Transverse colon (tissue), 4 donors: ENCODE measurements at regions of chr19 and their contacts with region 1.

Region 1: DNA sequence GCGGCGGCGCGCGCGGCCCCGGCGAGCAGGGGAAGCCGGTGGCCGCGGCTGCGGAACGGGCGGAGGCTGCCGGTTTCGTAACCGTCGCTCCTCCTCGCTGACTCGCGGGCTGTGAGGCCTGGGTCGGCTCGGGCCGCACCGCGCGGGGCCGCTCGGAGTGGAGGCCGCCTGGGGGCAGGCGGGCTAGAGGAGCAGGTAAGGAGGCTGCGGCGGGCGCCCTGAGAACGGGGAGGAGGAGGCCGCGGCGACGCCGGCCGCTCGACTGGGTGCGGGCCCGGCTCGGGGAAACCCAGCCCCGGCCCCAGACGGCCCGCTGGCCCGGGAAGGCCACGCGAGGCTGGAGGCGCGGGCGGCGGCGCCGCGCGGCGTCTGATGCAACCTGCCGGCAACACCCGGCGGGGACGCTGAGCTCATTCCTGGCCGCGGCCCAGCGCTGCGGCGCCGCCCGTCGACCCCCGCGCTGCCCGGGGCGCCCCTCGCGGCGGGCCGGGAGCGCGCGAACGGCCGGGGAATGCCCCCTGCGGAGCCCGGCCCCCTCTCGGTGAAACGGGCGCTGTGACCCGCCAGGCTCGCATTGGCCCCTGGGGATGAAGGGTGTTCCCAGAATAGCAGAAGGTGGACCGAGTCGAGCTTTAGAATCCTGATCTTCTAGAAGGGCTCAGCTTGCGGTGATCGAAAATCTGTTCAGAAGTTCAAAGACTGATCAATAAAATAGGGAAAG is at the start of gene CEBPG:
- DNase-seq: peak; percentile 68
- H3K4me3 ChIP-seq: peak within 1 kb of the TSS; percentile 83 to 96 (median 94)
- H3K27ac ChIP-seq: peak within 1 kb of the TSS; percentile 98 to 100 (median 100)
- H3K4me1 ChIP-seq: peaks cover 20 to 53% (median 42%) of the 10 kb centered on the region in 4 donors
- H3K27me3 ChIP-seq: no peaks in the 10 kb centered on the region
- CTCF ChIP-seq: peak in 3 of 5 experiments; percentile 18 to 36 (median 25)
- EP300 ChIP-seq: no peak
- POLR2A ChIP-seq: no peak
- total RNA-seq, gene CEBPG: 22.4 to 66.7 (median 46.9) TPM

Region 2: DNA sequence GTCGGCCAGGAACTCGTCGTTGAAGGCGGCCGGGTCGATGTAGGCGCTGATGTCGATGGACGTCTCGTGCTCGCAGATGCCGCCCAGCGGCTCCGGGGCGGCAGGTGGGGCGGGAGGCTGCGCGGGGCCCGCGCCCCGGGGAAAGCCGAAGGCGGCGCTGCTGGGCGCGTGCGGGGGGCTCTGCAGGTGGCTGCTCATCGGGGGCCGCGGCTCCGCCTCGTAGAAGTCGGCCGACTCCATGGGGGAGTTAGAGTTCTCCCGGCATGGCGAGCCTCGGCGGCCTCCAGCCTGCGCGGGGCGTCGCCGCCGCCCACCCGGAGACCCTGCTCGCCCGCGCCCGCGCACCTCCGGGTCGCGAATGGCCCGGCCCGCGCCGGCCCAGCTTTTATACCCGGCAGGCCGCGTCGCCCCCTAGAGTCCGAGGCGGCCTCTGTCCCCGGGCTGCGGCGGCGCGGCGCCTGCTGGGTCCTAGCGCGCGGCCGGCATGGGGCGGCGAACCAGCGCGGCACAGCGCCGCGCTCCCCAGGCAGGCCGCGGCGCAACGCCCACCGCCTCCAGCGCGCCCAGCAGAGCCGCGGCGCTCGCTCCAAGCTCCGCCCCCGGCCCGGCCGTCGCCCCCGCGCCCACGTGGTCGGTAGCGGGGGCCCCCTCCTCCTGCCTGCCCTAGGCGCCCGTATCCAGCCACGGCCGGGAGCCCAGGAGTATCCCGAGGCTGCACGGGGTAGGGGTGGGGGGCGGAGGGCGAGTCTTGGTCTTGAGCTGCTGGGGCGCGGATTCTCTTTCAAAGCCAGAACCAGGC is 71.5 kb before region 1 on chr19 and contains the start of gene CEBPA:
- in situ Hi-C with region 1: no loop called
- intact Hi-C with region 1: loop called (anchors 2 kb)
- DNase-seq: peak; percentile 88
- H3K4me3 ChIP-seq: peak within 1 kb of the TSS; percentile 55 to 78 (median 73)
- H3K27ac ChIP-seq: peak within 1 kb of the TSS; percentile 90 to 94 (median 92)
- H3K4me1 ChIP-seq: peaks cover 7 to 65% (median 26%) of the 10 kb centered on the region in 4 donors
- H3K27me3 ChIP-seq: peaks cover 9% of the 10 kb centered on the region
- CTCF ChIP-seq: peak in 4 of 5 experiments; percentile 25 to 49 (median 33)
- EP300 ChIP-seq: no peak
- POLR2A ChIP-seq: peak; percentile 73
- total RNA-seq, gene CEBPA: 69.4 to 84.2 (median 77.3) TPM

Region 3: GRCh38 chr19:33390110-33390907 is 16.4 kb after region 1 on chr19:
- in situ Hi-C with region 1: no loop called
- intact Hi-C with region 1: loop called (anchors 1 kb)
- DNase-seq: peak; percentile 45
- H3K4me3 ChIP-seq: no peak overlapping the region
- H3K27ac ChIP-seq: peak overlapping the region; percentile 62 to 82 (median 72)
- H3K4me1 ChIP-seq: peaks cover 31 to 67% (median 53%) of the 10 kb centered on the region in 4 donors
- H3K27me3 ChIP-seq: no peaks in the 10 kb centered on the region
- CTCF ChIP-seq: no peak
- EP300 ChIP-seq: no peak
- POLR2A ChIP-seq: no peak